Activated B cell treated with CpG ODN at 0.5 μM for 24 hours (primary cell): ENCODE measurements at regions of chr16 and their contacts with region 1.

Region 1: DNA sequence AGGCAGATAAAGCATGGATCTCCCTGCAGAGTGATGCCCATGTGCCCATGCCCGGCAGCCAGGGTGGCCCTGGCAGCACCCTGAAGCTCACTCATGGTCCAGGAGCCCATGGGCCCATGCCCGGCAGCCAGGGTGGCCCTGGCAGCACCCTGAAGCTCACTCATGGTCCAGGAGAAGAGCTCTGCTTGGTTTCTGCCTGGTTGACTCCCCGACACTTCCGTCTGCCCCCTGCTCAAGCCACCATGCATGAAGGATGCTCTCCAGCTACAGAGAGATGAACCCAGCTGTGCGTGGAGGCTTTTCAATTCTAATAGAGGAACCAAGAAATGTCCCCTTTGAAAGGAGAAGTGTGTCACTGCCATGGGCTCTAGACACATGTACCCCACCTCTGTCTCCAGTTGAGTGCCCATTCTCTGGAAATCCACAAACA is 8.7 kb downstream of the CCL17 start:
- DNase-seq: peak; percentile 52
- ATAC-seq: peak; percentile 89
- H3K4me3 Mint-ChIP-seq: peak overlapping the region; percentile 69
- H3K27ac Mint-ChIP-seq: peak overlapping the region; percentile 81
- H3K4me1 Mint-ChIP-seq: peaks cover 68% of the 10 kb centered on the region
- H3K27me3 Mint-ChIP-seq: no peaks in the 10 kb centered on the region
- CTCF ChIP-seq: no peak

Region 2: GRCh38 chr16:57115514-57116182 is 297.7 kb before region 1 on chr16:
- CTCF ChIA-PET with region 1: no interaction called
- POLR2A ChIA-PET with region 1: no interaction called
- intact Hi-C with region 1: no loop called
- DNase-seq: no peak
- ATAC-seq: no peak
- H3K4me3 Mint-ChIP-seq: no peak overlapping the region
- H3K27ac Mint-ChIP-seq: no peak overlapping the region
- H3K4me1 Mint-ChIP-seq: peaks cover 6% of the 10 kb centered on the region
- H3K27me3 Mint-ChIP-seq: no peaks in the 10 kb centered on the region
- CTCF ChIP-seq: no peak

Region 3: DNA sequence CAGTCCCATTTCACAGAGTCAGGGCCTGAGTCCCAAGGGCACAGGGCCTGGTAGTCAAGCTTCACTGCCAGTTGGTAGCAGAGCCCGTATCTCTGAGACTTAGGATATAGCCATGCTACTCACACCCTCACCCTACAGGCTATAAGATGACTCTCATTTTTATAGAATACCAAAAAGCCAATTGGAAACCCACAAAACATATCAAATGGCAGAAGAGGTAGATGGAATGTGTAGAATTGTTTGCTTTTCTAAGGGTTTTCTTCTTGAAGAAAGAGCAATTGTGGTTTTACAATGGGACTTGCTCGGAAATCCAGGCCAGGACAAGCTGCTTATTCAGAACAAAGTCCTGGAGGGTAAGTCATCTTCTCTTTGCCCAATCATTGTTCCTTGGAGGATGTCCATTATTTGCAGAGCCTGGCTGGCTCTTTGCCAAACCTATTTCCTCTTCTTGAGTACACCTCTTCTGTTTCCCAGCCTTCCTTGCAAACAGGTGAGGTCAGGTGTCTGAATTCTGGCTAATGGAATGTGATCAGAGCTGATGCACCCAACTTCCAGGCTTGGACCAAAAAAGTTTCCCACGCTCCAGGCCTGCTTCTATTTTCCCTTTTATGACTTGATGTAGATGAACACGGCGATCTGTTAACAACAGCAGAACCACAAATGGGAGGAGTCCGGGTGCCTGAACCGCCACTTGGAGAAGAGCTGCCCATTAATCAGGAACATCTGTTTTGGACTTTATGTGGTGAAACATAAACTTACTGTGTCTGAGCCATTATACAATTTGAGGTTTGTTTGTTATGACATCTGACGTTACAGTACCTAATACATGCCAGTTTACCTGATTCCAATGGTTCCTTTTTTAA is 71.6 kb before region 1 on chr16:
- CTCF ChIA-PET with region 1: interaction called, 8 read pairs
- POLR2A ChIA-PET with region 1: interaction called, 20 read pairs
- intact Hi-C with region 1: loop called (anchors 1 kb)
- DNase-seq: no peak
- ATAC-seq: no peak
- H3K4me3 Mint-ChIP-seq: peak overlapping the region; percentile 67
- H3K27ac Mint-ChIP-seq: peak overlapping the region; percentile 24
- H3K4me1 Mint-ChIP-seq: peaks cover 49% of the 10 kb centered on the region
- H3K27me3 Mint-ChIP-seq: peaks cover 9% of the 10 kb centered on the region
- CTCF ChIP-seq: no peak

Region 4: DNA sequence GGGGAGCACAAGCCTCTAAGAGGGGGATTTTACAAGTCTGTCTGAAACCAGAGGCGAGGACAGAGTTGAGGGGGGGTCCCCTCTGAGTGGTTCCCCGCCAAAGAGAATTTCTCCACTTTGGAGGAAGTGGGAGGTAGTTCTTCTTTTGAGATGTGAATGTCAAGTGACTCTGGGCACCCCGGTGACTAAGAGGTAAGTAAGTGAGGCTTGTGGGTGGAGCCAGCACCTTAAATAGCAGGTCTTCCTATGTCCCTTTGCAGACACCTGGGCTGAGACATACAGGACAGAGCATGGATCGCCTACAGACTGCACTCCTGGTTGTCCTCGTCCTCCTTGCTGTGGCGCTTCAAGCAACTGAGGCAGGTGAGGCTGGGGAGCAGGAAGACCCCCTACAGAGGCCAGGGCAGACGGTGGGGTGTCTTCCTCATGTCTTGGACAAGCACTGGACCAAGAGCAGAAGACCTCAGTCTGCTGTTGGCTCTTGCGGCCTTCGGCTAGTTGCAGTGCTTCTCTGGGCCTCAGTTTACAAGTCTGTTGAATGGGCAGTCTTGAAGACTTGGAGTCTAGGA is 54.7 kb before region 1 on chr16 and contains the start of gene CCL22:
- CTCF ChIA-PET with region 1: interaction called, 3 read pairs
- POLR2A ChIA-PET with region 1: interaction called, 5 read pairs
- intact Hi-C with region 1: loop called (anchors 1 kb)
- DNase-seq: peak; percentile 36
- ATAC-seq: peak; percentile 84
- H3K4me3 Mint-ChIP-seq: peak within 1 kb of the TSS; percentile 85
- H3K27ac Mint-ChIP-seq: peak within 1 kb of the TSS; percentile 82
- H3K4me1 Mint-ChIP-seq: peaks cover 32% of the 10 kb centered on the region
- H3K27me3 Mint-ChIP-seq: no peaks in the 10 kb centered on the region
- CTCF ChIP-seq: no peak
- total RNA-seq, gene CCL22: 276 and 288 TPM in 2 replicates

Region 5: GRCh38 chr16:57383276-57384247 is 29.8 kb before region 1 on chr16:
- CTCF ChIA-PET with region 1: interaction called, 14 read pairs
- POLR2A ChIA-PET with region 1: interaction called, 22 read pairs
- intact Hi-C with region 1: loop called (anchors 1 kb)
- DNase-seq: no peak
- ATAC-seq: no peak
- H3K4me3 Mint-ChIP-seq: peak overlapping the region; percentile 1
- H3K27ac Mint-ChIP-seq: peak overlapping the region; percentile 84
- H3K4me1 Mint-ChIP-seq: peaks cover 70% of the 10 kb centered on the region
- H3K27me3 Mint-ChIP-seq: no peaks in the 10 kb centered on the region
- CTCF ChIP-seq: no peak

Region 6: GRCh38 chr16:57519796-57520360 is 106.6 kb after region 1 on chr16:
- CTCF ChIA-PET with region 1: interaction called, 51 read pairs
- POLR2A ChIA-PET with region 1: interaction called, 16 read pairs
- intact Hi-C with region 1: no loop called
- DNase-seq: peak; percentile 68
- ATAC-seq: peak; percentile 80
- H3K4me3 Mint-ChIP-seq: no peak overlapping the region
- H3K27ac Mint-ChIP-seq: no peak overlapping the region
- H3K4me1 Mint-ChIP-seq: peaks cover 40% of the 10 kb centered on the region
- H3K27me3 Mint-ChIP-seq: no peaks in the 10 kb centered on the region
- CTCF ChIP-seq: peak; percentile 96